Gastrocnemius medialis (tissue), 4 donors: ENCODE measurements at regions of chr16 and their contacts with region 1.

Region 1: DNA sequence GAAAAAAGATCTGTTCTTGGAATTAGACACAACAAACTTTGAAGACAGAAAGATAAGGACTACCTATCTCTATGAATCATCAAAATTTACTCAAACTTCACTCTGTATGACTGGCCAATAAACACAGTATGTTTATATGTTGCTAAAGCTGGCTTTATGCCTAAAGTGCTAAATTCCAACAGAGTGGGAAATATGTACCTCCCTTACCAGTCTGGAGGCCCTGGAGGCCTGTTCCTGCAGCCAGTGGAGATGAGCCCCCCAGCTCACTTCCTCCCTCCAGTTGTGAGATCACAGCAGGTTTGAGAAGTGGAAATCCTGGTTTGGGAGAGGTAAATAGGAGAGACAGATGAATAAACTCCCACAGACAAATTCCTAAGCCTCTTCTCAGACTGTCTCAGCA is 9.0 kb downstream of the ZNF23 start:
- DNase-seq: no peak
- ATAC-seq: no peak
- H3K4me3 ChIP-seq: no peak overlapping the region
- H3K27ac ChIP-seq: no peak overlapping the region
- H3K4me1 ChIP-seq: no peaks in the 10 kb centered on the region
- H3K27me3 ChIP-seq: peaks cover 0 to 7% (median 0%) of the 10 kb centered on the region in 3 donors
- CTCF ChIP-seq: no peak
- POLR2A ChIP-seq: no peak

Region 2: GRCh38 chr16:71493213-71493612 is 40.2 kb after region 1 on chr16:
- in situ Hi-C with region 1: loop called in 1 of 4 experiments (anchors 5 kb)
- intact Hi-C with region 1: loop called (anchors 5 kb)
- DNase-seq: no peak
- ATAC-seq: no peak
- H3K4me3 ChIP-seq: no peak overlapping the region
- H3K27ac ChIP-seq: no peak overlapping the region
- H3K4me1 ChIP-seq: no peaks in the 10 kb centered on the region
- H3K27me3 ChIP-seq: peaks cover 0 to 5% (median 0%) of the 10 kb centered on the region in 3 donors
- CTCF ChIP-seq: no peak
- POLR2A ChIP-seq: no peak